Naive thymus-derived CD4-positive, alpha-beta T cell (primary cell): ENCODE measurements at regions of chr14 and their contacts with region 1.

Region 1: GRCh38 chr14:24232121-24232644 is at the start of gene NEDD8:
- DNase-seq: peak; percentile 72 to 91 (median 88)
- ATAC-seq: peak; percentile 91
- H3K4me3 ChIP-seq: peak within 1 kb of the TSS; percentile 99
- H3K4me3 Mint-ChIP-seq: peak within 1 kb of the TSS; percentile 86 to 100 (median 96)
- H3K27ac ChIP-seq: peak within 1 kb of the TSS; percentile 89
- H3K27ac Mint-ChIP-seq: peak within 1 kb of the TSS; percentile 89 to 98 (median 93)
- H3K4me1 ChIP-seq: peaks cover 11 to 27% of the 10 kb centered on the region in 2 donors
- H3K4me1 Mint-ChIP-seq: peaks cover 36 to 79% (median 63%) of the 10 kb centered on the region in 7 donors
- H3K27me3 ChIP-seq: no peaks in the 10 kb centered on the region
- H3K27me3 Mint-ChIP-seq: no peaks in the 10 kb centered on the region
- total RNA-seq, gene NEDD8: 73.5 to 175 (median 106) TPM

Region 2: GRCh38 chr14:24013654-24014514 is 218.3 kb before region 1 on chr14:
- CTCF ChIA-PET with region 1: no interaction called
- POLR2A ChIA-PET with region 1: no interaction called
- intact Hi-C with region 1: loop called in 1 of 2 experiments (anchors 2 kb)
- DNase-seq: peak in 8 of 9 donors; percentile 17 to 76 (median 67)
- ATAC-seq: peak; percentile 94
- H3K4me3 ChIP-seq: no peak overlapping the region
- H3K4me3 Mint-ChIP-seq: no peak overlapping the region
- H3K27ac ChIP-seq: no peak overlapping the region
- H3K27ac Mint-ChIP-seq: no peak overlapping the region
- H3K4me1 ChIP-seq: peaks cover 0 to 6% of the 10 kb centered on the region in 2 donors
- H3K4me1 Mint-ChIP-seq: peaks cover 8 to 28% (median 25%) of the 10 kb centered on the region in 7 donors
- H3K27me3 ChIP-seq: no peaks in the 10 kb centered on the region
- H3K27me3 Mint-ChIP-seq: peaks cover 0 to 15% (median 0%) of the 10 kb centered on the region in 5 donors

Region 3: DNA sequence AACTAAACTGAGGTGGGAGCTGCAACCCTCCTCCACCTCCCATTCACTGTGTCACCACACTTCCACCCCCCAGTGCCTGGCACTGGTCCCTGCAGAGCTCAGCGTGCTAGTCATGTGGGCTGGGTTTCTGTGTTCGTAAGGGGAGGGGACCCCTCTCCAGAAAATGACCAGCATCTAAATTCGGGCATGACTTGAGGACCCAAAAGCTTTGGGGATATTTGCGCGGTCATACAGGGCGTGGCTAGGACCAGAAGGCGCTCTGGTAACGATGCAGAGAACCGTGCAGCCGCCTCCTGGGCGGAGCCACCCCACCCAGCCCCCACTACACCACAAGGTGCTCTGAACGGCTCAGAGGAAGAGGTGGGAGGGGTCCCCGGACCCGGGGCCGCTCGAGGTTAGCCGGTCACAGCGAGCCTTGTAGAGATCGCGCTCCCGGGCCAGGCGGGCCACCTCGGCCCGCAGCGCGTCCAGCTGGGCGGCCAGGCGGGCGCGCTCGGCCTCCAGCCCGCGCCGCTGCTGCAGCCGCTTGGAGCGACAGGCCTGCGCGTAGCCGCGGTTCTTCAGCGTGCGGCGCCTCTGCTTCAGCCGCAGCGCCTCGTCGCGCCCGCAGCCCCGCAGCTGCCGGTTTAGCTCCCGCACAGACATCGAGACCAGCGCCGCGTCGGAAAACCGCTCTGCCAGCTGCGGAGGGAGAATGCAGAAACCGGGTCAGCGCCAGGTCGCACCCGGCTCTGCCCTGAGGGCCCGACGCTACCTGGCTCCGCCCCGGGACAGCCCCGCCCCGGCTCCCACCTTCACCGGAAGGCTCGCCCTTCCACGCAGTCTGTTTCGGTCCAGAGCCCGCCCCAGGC is 151.1 kb before region 1 on chr14:
- CTCF ChIA-PET with region 1: no interaction called
- POLR2A ChIA-PET with region 1: no interaction called
- intact Hi-C with region 1: no loop called
- DNase-seq: peak; percentile 46 to 75 (median 72)
- ATAC-seq: peak; percentile 92
- H3K4me3 ChIP-seq: peak overlapping the region; percentile 82
- H3K4me3 Mint-ChIP-seq: peak overlapping the region; percentile 80 to 90 (median 86)
- H3K27ac ChIP-seq: peak overlapping the region; percentile 75
- H3K27ac Mint-ChIP-seq: peak overlapping the region; percentile 32 to 92 (median 85)
- H3K4me1 ChIP-seq: peaks cover 7 to 14% of the 10 kb centered on the region in 2 donors
- H3K4me1 Mint-ChIP-seq: peaks cover 16 to 20% (median 18%) of the 10 kb centered on the region in 7 donors
- H3K27me3 ChIP-seq: no peaks in the 10 kb centered on the region
- H3K27me3 Mint-ChIP-seq: peaks cover 0 to 20% (median 0%) of the 10 kb centered on the region in 5 donors

Region 4: GRCh38 chr14:24135834-24136542 is 96.2 kb before region 1 on chr14 and contains the start of gene PSME1:
- CTCF ChIA-PET with region 1: no interaction called
- POLR2A ChIA-PET with region 1: interaction called, 3 read pairs
- intact Hi-C with region 1: loop called (anchors 1 to 2 kb)
- DNase-seq: peak; percentile 88 to 97 (median 92)
- ATAC-seq: peak; percentile 99
- H3K4me3 ChIP-seq: peak within 1 kb of the TSS; percentile 83
- H3K4me3 Mint-ChIP-seq: peak within 1 kb of the TSS; percentile 88 to 95 (median 92)
- H3K27ac ChIP-seq: peak within 1 kb of the TSS; percentile 97
- H3K27ac Mint-ChIP-seq: peak within 1 kb of the TSS; percentile 86 to 98 (median 93)
- H3K4me1 ChIP-seq: peaks cover 16 to 37% of the 10 kb centered on the region in 2 donors
- H3K4me1 Mint-ChIP-seq: peaks cover 48 to 71% (median 64%) of the 10 kb centered on the region in 7 donors
- H3K27me3 ChIP-seq: no peaks in the 10 kb centered on the region
- H3K27me3 Mint-ChIP-seq: no peaks in the 10 kb centered on the region
- total RNA-seq, gene PSME1: 189 to 583 (median 202) TPM

Region 5: GRCh38 chr14:24141097-24141880 is 90.9 kb before region 1 on chr14 and contains the start of gene EMC9:
- CTCF ChIA-PET with region 1: no interaction called
- POLR2A ChIA-PET with region 1: interaction called, 3 read pairs
- intact Hi-C with region 1: loop called (anchors 1 to 2 kb)
- DNase-seq: peak; percentile 90 to 100 (median 99)
- ATAC-seq: peak; percentile 94
- H3K4me3 ChIP-seq: peak within 1 kb of the TSS; percentile 87
- H3K4me3 Mint-ChIP-seq: peak within 1 kb of the TSS; percentile 85 to 100 (median 94)
- H3K27ac ChIP-seq: peak within 1 kb of the TSS; percentile 83
- H3K27ac Mint-ChIP-seq: peak within 1 kb of the TSS; percentile 83 to 96 (median 93)
- H3K4me1 ChIP-seq: peaks cover 33 to 43% of the 10 kb centered on the region in 2 donors
- H3K4me1 Mint-ChIP-seq: peaks cover 47 to 87% (median 77%) of the 10 kb centered on the region in 7 donors
- H3K27me3 ChIP-seq: no peaks in the 10 kb centered on the region
- H3K27me3 Mint-ChIP-seq: no peaks in the 10 kb centered on the region
- total RNA-seq, gene EMC9: 9.0 to 25.5 (median 22.3) TPM

Region 6: GRCh38 chr14:24195191-24196070 is 36.8 kb before region 1 on chr14 and contains the start of gene TM9SF1:
- CTCF ChIA-PET with region 1: no interaction called
- POLR2A ChIA-PET with region 1: interaction called, 7 read pairs
- intact Hi-C with region 1: loop called (anchors 1 kb)
- DNase-seq: peak; percentile 86 to 92 (median 90)
- ATAC-seq: peak; percentile 90
- H3K4me3 ChIP-seq: peak within 1 kb of the TSS; percentile 74
- H3K4me3 Mint-ChIP-seq: peak within 1 kb of the TSS; percentile 88 to 97 (median 93)
- H3K27ac ChIP-seq: peak within 1 kb of the TSS; percentile 99
- H3K27ac Mint-ChIP-seq: peak within 1 kb of the TSS; percentile 88 to 98 (median 98)
- H3K4me1 ChIP-seq: peaks cover 14 to 16% of the 10 kb centered on the region in 2 donors
- H3K4me1 Mint-ChIP-seq: peaks cover 38 to 69% (median 59%) of the 10 kb centered on the region in 7 donors
- H3K27me3 ChIP-seq: no peaks in the 10 kb centered on the region
- H3K27me3 Mint-ChIP-seq: no peaks in the 10 kb centered on the region
- total RNA-seq, gene TM9SF1: 16.2 to 40.5 (median 19.2) TPM